CD4-positive, alpha-beta memory T cell (primary cell): ENCODE measurements at regions of chr1 and their contacts with region 1.

Region 1: DNA sequence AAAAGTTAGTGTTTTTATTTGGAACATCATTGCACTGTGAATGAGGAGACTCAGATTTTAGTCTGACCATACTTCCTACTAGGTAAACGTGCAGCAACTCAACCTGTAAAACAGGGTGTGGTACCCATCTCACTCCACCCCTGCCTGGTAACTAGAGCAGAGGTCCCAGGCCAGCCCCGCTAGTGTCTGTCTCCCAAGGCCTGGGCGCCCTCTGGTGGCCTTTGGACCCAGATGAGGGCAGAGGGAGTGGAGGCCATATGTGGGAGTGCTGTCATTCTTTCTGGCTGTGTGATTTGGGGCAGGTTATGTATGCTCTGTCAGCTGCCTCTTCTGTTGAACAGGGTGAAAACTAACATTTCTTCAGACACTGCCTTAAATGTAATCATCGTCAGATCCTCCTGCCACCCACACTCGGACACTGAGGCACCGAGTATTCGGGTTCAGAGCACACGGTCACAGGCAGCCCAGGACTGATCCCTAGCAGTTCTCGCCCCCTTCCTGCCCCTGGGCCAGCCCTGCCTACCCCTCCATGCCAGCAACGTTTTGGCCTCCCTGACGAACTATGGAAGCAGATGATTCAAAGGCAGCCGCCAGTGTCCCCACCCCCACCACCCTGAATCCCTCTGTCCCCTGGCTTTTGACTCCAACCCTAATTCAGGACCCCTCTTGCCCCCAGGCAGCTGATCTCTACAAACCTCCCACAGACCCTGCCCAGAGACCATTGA is 76.0 kb downstream of the CD247 start:
- DNase-seq: peak; percentile 82 to 89 (median 85)
- H3K4me3 ChIP-seq: no peak overlapping the region
- H3K4me3 Mint-ChIP-seq: peak overlapping the region in 5 of 8 donors; percentile 26 to 61 (median 54)
- H3K27ac ChIP-seq: peak overlapping the region; percentile 17
- H3K27ac Mint-ChIP-seq: peak overlapping the region; percentile 75 to 94 (median 88)
- H3K4me1 ChIP-seq: peaks cover 82% of the 10 kb centered on the region
- H3K4me1 Mint-ChIP-seq: peaks cover 61 to 94% (median 76%) of the 10 kb centered on the region in 4 donors
- H3K27me3 ChIP-seq: no peaks in the 10 kb centered on the region
- H3K27me3 Mint-ChIP-seq: no peaks in the 10 kb centered on the region

Region 2: GRCh38 chr1:167263819-167264464 is 178.3 kb before region 1 on chr1:
- CTCF ChIA-PET with region 1: interaction called, 36 read pairs
- POLR2A ChIA-PET with region 1: no interaction called
- intact Hi-C with region 1: loop called (anchors 1 kb)
- DNase-seq: peak in 2 of 5 donors; percentile 4 to 8
- H3K4me3 ChIP-seq: no peak overlapping the region
- H3K4me3 Mint-ChIP-seq: no peak overlapping the region
- H3K27ac ChIP-seq: no peak overlapping the region
- H3K27ac Mint-ChIP-seq: no peak overlapping the region
- H3K4me1 ChIP-seq: peaks cover 45% of the 10 kb centered on the region
- H3K4me1 Mint-ChIP-seq: peaks cover 17 to 27% (median 19%) of the 10 kb centered on the region in 4 donors
- H3K27me3 ChIP-seq: no peaks in the 10 kb centered on the region
- H3K27me3 Mint-ChIP-seq: no peaks in the 10 kb centered on the region

Region 3: DNA sequence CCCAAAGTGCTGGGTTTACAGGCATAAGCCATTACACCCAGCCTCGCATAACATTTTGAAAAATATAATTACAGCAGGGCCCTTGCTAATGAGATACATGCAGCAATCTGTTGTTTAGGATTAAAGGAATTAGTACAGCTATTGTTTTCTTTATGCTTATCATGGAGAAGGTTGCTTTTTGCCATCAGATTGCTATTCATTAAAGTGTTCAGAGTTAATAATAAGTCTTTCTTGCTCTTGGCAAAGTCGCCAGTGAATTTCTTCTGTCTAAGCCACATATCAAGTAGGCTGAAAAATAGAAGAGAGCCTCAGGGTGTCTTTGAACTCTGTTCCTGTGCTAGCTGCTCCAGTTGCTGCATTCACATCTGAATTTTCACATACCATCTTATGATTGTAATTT is 77.5 kb before region 1 on chr1:
- CTCF ChIA-PET with region 1: no interaction called
- POLR2A ChIA-PET with region 1: no interaction called
- intact Hi-C with region 1: no loop called
- DNase-seq: no peak
- H3K4me3 ChIP-seq: no peak overlapping the region
- H3K4me3 Mint-ChIP-seq: no peak overlapping the region
- H3K27ac ChIP-seq: no peak overlapping the region
- H3K27ac Mint-ChIP-seq: no peak overlapping the region
- H3K4me1 ChIP-seq: no peaks in the 10 kb centered on the region
- H3K4me1 Mint-ChIP-seq: peaks cover 0 to 6% (median 3%) of the 10 kb centered on the region in 4 donors
- H3K27me3 ChIP-seq: no peaks in the 10 kb centered on the region
- H3K27me3 Mint-ChIP-seq: no peaks in the 10 kb centered on the region

Region 4: GRCh38 chr1:167401260-167401873 is 40.9 kb before region 1 on chr1:
- CTCF ChIA-PET with region 1: interaction called, 10 read pairs
- POLR2A ChIA-PET with region 1: no interaction called
- intact Hi-C with region 1: loop called (anchors 1 kb)
- DNase-seq: peak in 4 of 5 donors; percentile 37 to 47 (median 41)
- H3K4me3 ChIP-seq: no peak overlapping the region
- H3K4me3 Mint-ChIP-seq: no peak overlapping the region
- H3K27ac ChIP-seq: no peak overlapping the region
- H3K27ac Mint-ChIP-seq: no peak overlapping the region
- H3K4me1 ChIP-seq: no peaks in the 10 kb centered on the region
- H3K4me1 Mint-ChIP-seq: peaks cover 0 to 3% (median under 1%) of the 10 kb centered on the region in 4 donors
- H3K27me3 ChIP-seq: no peaks in the 10 kb centered on the region
- H3K27me3 Mint-ChIP-seq: no peaks in the 10 kb centered on the region

Region 5: DNA sequence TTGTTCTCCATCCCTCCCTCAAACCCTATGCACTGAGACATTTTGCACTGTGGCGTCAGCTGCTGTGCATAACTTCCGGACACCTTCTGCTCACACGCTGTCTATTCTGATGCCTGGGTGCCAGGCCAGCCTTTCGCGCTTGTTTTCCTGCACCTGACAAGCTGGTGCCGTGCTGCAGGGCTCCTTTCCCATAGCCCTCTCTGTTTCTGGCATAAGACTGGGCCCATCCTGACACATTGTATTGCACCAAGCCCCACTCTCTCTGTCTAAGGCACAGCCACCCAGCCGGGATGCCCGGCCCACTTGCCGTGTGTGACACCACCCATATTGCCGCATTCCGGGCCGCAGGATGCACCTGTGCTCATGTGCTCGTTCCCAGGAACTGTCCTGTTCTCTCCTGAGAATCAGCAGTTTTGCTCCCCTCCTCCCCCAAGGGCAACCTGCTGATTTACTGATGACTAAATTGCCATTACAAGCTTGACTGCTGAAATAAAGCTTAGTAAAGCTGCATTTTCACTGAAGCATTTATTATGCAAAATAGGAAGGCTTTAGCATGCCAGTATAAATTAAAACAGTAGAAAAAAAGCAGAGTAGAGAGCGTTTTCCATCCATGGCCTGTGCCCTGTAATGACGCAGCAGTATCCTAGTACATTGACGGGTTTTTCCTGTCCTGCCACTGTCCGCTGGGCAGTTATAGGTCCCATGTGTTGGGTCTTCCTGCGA is 12.0 kb before region 1 on chr1:
- CTCF ChIA-PET with region 1: interaction called, 15 read pairs
- POLR2A ChIA-PET with region 1: interaction called, 8 read pairs
- intact Hi-C with region 1: no loop called
- DNase-seq: no peak
- H3K4me3 ChIP-seq: no peak overlapping the region
- H3K4me3 Mint-ChIP-seq: peak overlapping the region in 1 of 8 donors; percentile 47
- H3K27ac ChIP-seq: no peak overlapping the region
- H3K27ac Mint-ChIP-seq: peak overlapping the region; percentile 10 to 89 (median 70)
- H3K4me1 ChIP-seq: peaks cover 53% of the 10 kb centered on the region
- H3K4me1 Mint-ChIP-seq: peaks cover 27 to 48% (median 35%) of the 10 kb centered on the region in 4 donors
- H3K27me3 ChIP-seq: no peaks in the 10 kb centered on the region
- H3K27me3 Mint-ChIP-seq: no peaks in the 10 kb centered on the region

Region 6: DNA sequence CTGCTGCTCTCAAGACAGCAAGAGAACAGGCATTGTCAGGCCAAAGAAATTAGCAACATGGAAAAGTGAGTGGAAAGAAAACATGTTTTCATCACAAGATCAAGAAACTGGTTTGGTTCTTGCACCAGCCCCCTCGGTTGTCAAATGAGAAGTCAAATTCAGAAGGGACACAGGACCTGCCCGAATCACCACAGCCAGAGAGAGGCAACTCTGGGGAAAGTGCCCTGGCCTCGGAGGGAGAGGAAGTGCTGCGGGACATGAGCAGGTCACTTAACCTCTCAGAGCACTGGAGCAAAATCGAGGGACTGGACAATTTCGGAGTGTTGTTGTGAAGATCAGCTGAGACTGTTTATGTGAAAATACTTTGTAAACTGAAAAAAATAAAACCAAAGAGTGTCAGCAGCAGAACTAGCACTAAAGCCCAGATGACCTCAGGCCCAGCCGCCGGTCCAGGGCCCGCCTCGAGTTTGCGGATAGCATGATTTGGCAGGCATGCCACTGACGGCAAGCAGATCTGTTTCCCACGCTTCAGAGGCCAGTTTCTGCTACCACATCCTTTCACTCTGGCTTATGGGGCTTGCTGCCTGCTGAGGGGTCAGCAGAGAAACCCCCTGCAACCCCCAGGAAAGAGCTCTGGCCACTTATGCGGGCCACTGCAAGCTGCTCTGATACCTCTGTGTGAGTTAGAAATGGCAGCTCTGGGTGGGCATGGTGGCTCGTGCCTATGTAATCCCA is 44.0 kb after region 1 on chr1:
- CTCF ChIA-PET with region 1: interaction called, 24 read pairs
- POLR2A ChIA-PET with region 1: interaction called, 29 read pairs
- intact Hi-C with region 1: loop called (anchors 1 kb)
- DNase-seq: peak in 1 of 5 donors; percentile 46
- H3K4me3 ChIP-seq: no peak overlapping the region
- H3K4me3 Mint-ChIP-seq: peak overlapping the region; percentile 38 to 89 (median 75)
- H3K27ac ChIP-seq: peak overlapping the region; percentile 55
- H3K27ac Mint-ChIP-seq: peak overlapping the region; percentile 52 to 100 (median 94)
- H3K4me1 ChIP-seq: peaks cover 99% of the 10 kb centered on the region
- H3K4me1 Mint-ChIP-seq: peaks cover 76 to 100% (median 90%) of the 10 kb centered on the region in 4 donors
- H3K27me3 ChIP-seq: no peaks in the 10 kb centered on the region
- H3K27me3 Mint-ChIP-seq: no peaks in the 10 kb centered on the region